Right ventricle myocardium inferior (tissue), 1 donor: ENCODE measurements at regions of chr1 and their contacts with region 1.

Region 1: DNA sequence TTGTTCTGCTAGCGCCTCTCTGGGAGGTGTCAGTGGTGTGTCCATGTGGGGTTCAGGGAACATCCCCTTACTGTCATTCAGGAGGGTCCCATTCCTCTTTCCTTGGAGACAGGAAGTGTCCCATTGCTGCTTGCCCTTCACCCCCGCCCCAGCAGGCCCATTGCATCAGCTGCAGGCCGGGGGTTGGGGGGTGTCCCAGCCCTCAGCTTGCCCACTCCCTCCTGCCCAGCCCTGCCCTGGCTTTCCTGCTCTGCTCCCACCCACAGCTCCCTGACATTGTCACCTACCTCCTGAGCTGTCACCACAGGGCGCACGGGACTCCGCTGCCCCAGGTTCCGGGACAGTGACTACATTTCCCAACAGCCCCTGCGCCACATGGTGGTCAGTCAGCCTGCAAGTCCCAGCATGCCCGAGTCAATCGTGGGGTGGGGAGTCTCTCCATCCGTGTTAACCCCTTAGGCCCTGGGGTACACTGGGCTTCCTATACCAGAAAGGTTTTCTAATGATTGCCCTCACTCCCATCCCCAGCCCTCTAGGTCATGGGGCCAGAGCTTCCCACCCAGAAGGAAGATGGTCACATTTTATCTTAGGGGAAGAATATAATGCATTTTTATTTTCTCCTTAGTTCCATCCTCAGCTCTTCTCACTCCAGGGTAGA is at the start of gene INPP5B:
- DNase-seq: peak; percentile 93
- ATAC-seq: peak; percentile 96
- total RNA-seq, gene INPP5B: 11.2 TPM

Region 2: GRCh38 chr1:37931361-37932158 is 15.3 kb before region 1 on chr1:
- intact Hi-C with region 1: loop called (anchors 1 kb)
- DNase-seq: peak; percentile 97
- ATAC-seq: peak; percentile 97

Region 3: DNA sequence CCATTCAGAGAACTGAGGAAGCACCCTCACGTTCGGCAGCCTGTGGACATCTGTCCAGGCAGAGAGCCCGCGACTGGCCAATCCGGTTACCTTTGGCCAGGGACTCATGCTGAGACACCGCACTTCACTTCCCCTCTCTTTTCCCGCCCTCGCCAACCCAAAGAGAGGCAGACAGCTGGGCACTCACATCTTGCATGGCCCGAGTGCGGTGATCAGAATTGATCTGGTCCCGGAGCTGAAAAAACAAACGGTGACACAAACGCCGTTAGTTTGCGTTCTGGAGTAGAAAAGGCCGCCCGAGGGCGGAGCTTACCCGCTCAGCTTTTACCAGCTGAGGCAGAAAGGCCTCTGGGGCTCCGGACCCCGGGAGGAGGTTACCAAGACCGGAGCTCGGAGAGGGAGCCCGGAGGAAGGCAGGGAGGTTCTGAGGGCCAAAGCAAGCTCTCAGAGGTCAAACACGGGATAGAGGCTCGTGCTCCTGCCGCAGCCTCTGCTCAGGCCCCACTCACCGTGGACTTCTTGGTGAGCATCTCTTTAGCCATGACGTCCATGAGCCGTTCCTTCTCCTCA is 42.6 kb after region 1 on chr1:
- intact Hi-C with region 1: loop called (anchors 5 kb)
- DNase-seq: no peak
- ATAC-seq: no peak

Region 4: DNA sequence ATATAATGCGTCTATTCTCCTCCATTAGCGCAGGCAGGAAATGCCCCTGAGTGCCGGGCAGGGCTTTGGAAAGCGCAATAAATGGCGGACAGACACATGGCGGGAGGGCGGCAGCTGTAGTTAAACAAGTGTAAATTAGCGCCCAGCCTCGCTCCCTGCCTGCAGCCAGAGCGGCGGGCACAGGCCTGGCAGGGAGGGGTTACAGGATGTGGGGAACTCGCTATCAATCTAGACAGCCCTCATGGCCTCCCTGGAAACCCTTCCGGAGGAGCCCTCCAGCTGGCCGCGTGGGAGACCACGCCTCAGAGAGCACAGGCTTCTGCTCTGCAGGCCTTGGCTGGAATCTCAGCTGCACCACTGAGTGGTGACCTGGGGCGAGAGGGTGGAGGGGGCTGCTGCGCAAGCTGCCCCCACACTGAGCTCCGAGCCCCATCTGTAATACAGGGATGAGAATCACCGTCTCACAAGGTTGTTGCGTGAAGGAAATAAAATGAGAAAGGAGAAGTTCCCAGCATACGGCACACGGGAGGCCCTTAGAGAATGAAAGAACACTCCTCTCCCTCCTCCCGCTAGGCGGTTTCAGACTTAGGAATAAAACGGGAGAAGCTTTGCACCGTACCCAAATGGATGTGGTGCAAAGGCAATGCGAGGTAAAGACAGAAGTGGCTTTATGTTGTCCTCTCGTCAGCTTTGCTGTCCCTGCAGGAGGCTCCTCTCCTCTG is 267.0 kb after region 1 on chr1:
- intact Hi-C with region 1: no loop called
- DNase-seq: no peak
- ATAC-seq: no peak